ENCODE measurements at regions of chr11 and their contacts with region 1.

Region 1: DNA sequence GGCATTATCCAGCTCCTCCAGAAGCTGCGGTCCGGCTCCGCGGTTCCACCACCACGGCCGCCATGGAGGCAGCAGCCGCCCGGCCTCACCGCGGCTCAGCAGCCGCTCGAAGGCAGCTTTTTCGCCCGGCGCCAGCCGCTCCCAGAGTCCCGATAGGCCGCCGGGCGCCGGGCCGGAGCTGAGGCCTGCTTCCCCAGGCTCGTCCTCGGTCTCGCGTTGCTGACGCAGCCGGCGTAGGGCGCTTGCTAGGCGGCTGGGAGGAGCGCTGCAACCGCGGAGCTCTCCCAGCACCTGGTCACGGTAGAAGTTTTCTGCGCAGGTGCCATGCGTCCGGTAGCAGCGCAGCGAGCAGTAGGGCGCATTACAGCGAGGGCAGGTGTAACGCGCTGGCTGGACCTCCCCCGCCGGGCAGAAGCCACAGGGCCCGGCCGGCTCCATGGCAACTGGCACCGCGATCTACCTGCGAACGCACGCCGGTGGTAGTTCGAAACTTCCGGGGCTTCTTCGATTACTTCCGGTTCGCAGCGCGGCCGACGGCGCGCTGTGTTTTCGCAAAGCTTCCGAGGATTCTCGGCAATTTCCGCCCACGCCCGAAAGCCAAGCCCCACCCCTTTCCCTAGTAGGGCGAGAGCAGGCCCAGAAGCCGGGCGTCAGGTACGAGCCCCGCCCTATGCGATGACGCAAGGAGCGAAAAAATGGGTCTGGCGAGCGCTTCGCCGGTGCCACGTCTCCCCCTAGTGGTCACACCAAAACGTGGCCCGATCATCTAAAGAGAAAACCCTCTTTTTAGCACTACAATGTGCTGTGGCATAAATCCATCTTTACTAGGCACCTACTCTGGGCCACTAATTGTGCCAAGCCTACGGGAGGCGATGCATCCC is at the start of gene ZNHIT2:
- DNase-seq: peak; percentile 98
- ATAC-seq: peak; percentile 70
- H3K4me3 Mint-ChIP-seq: peak within 1 kb of the TSS; percentile 87
- H3K27ac Mint-ChIP-seq: peak within 1 kb of the TSS; percentile 89
- H3K4me1 Mint-ChIP-seq: peaks cover 76% of the 10 kb centered on the region
- H3K27me3 Mint-ChIP-seq: no peaks in the 10 kb centered on the region
- CTCF ChIP-seq: peak; percentile 34
- total RNA-seq, gene ZNHIT2: 11.3 and 13.4 TPM in 2 replicates

Region 2: DNA sequence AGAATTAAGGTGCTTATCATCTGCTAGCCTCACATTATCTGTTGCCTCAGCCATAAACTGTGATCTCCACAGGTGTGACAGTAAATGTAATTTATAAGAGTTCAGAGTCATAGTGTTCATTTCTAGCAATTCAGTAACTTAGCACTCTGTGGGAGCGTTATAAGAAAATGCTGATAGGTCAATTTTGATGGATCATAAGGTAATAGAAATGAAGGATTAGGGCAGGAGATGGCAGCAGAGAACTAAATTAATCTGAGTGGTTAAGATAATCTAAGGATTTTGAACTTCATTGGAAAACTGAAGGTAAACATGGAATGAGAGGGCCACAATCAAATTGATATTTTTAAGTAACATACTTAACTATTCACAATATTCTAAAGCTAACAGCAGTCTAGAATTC is 1774.3 kb before region 1 on chr11:
- CTCF ChIA-PET with region 1: no interaction called
- POLR2A ChIA-PET with region 1: no interaction called
- intact Hi-C with region 1: no loop called
- DNase-seq: no peak
- ATAC-seq: no peak
- H3K4me3 Mint-ChIP-seq: no peak overlapping the region
- H3K27ac Mint-ChIP-seq: no peak overlapping the region
- H3K4me1 Mint-ChIP-seq: no peaks in the 10 kb centered on the region
- H3K27me3 Mint-ChIP-seq: peaks cover 3% of the 10 kb centered on the region
- CTCF ChIP-seq: no peak

Region 3: DNA sequence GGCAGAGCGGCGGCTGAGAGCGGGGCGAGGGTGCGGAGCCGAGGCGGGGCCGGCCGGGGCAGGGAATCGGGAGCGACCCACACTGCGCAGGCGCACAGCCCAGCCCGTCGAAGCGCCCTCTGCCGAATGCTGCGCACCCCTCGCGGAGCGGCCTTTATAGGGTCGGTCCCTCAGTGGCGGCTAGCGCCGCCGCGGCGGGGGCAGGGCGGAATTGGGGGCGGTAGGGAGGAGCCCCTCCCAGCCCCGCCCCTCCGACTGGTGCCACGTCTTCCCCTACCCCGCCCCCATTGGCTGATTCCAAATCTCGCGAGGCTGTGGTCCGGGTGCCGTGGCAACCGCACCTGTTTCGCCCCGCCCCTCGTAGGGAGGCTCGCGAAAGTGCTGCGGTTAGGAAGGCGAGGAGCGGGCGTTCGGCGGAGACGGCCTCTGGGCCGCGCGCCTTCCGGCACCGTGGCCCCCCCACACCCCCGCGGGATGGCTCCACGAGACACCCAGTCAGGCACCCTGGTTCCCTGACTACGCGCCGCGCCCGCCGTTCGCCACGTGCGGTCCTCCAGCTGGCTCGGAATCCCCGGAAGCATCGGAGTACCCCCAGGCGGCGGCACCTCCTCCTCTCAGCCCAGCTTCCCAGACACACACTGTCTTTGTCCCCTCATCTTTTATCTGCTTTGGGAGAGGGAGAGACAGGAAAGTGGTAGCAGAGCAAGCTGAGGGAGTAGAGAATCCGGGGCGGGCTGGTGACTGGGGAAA is 238.8 kb before region 1 on chr11 and contains the start of gene EHD1:
- CTCF ChIA-PET with region 1: no interaction called
- POLR2A ChIA-PET with region 1: interaction called, 3 read pairs
- intact Hi-C with region 1: loop called (anchors 1 kb)
- DNase-seq: peak; percentile 98
- ATAC-seq: peak; percentile 81
- H3K4me3 Mint-ChIP-seq: peak within 1 kb of the TSS; percentile 97
- H3K27ac Mint-ChIP-seq: peak within 1 kb of the TSS; percentile 95
- H3K4me1 Mint-ChIP-seq: peaks cover 57% of the 10 kb centered on the region
- H3K27me3 Mint-ChIP-seq: no peaks in the 10 kb centered on the region
- CTCF ChIP-seq: no peak
- total RNA-seq, gene EHD1: 357 and 360 TPM in 2 replicates

Region 4: DNA sequence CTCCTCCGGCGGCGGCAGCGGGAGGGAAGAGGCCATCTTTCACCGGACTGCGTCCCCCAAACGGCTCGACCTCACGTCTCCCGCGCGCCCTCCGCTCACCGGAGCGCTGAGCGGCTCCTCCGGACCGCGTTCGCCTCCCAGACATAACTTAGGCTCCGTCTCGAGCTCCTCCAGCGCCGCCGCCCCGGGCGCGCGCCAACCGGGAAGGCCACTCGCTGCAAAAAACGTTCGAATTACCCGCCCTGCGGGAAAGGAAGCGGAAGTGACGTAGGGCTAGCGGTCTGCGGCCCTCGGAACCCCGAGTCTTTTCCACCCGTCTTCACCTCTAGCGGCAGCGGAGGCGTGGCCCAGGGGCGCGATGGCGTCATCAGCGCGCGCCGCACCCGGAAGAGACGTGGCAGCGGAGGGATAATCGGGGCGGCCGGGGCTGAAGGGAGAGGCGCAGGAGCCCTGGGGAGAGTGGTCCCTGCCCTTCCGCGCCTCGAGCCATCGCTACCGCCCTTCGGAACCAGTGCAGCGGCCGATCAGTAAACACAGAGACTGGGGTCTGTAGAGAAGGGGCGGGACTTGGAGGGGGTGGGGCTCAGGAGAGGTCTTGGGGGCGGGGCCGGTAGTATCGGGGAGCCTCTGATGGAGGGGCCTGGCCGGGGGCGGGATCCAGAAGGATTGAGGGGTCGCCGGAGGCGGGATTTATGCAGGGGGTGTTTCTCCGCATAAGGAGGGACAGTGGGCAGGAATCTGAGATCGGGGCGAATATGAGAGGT is 33.4 kb before region 1 on chr11 and contains the starts of genes CDCA5 and ZFPL1:
- CTCF ChIA-PET with region 1: interaction called, 5 read pairs
- POLR2A ChIA-PET with region 1: interaction called, 6 read pairs
- intact Hi-C with region 1: loop called (anchors 1 kb)
- DNase-seq: peak; percentile 97
- ATAC-seq: peak; percentile 92
- H3K4me3 Mint-ChIP-seq: peak within 1 kb of the TSS; percentile 93
- H3K27ac Mint-ChIP-seq: peak within 1 kb of the TSS; percentile 94
- H3K4me1 Mint-ChIP-seq: peaks cover 25% of the 10 kb centered on the region
- H3K27me3 Mint-ChIP-seq: no peaks in the 10 kb centered on the region
- CTCF ChIP-seq: no peak
- total RNA-seq, gene CDCA5: 2.6 and 3.4 TPM in 2 replicates
- total RNA-seq, gene ZFPL1: 35.7 and 36.6 TPM in 2 replicates

Region 5: DNA sequence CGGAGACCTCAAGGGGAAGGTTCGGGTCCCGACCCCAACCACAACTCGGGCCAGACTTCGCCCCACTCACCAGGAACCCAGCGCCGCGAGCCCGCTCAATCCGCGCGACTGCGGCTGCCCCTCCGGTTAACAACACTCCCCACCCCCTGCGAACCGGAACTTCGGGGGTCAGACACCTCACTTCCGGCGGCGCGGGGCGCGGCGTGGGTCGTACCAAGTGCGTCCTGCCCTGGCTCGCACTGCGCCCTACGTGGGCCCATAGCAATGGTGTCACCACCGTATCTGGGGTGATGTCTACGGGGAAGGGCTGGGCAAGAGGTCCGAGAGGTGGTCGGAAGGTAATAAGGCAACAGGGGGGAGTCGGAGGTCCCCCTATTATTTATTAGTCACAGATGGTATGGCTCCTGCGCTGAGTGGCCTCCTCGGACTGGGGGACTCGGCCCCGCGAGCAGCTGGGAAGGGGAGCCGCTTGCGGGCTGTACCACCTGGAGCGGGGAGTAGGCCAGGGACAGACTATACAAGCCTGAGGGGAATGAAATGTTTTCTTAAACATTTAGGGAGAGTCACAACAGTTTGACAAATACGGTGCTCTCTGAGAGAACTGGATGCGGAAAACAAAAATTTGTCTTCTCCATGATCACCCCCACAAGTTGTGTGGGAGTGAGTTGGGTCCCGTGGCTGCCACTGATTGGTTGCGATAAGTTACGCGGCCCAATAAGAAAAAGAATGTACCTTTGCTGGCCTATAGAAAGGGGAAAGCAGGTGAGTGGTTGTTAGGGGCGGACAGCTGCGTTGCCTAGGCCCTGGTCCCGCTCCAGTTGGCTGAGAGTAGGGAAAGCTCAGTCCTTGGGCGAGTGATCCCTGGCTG is 17.2 kb after region 1 on chr11 and contains the start of gene SYVN1:
- CTCF ChIA-PET with region 1: interaction called, 28 read pairs
- POLR2A ChIA-PET with region 1: interaction called, 546 read pairs
- intact Hi-C with region 1: loop called (anchors 1 kb)
- DNase-seq: peak; percentile 92
- ATAC-seq: peak; percentile 60
- H3K4me3 Mint-ChIP-seq: peak within 1 kb of the TSS; percentile 99
- H3K27ac Mint-ChIP-seq: peak within 1 kb of the TSS; percentile 99
- H3K4me1 Mint-ChIP-seq: peaks cover 64% of the 10 kb centered on the region
- H3K27me3 Mint-ChIP-seq: no peaks in the 10 kb centered on the region
- CTCF ChIP-seq: no peak
- total RNA-seq, gene SYVN1: 232 and 238 TPM in 2 replicates

Region 6: DNA sequence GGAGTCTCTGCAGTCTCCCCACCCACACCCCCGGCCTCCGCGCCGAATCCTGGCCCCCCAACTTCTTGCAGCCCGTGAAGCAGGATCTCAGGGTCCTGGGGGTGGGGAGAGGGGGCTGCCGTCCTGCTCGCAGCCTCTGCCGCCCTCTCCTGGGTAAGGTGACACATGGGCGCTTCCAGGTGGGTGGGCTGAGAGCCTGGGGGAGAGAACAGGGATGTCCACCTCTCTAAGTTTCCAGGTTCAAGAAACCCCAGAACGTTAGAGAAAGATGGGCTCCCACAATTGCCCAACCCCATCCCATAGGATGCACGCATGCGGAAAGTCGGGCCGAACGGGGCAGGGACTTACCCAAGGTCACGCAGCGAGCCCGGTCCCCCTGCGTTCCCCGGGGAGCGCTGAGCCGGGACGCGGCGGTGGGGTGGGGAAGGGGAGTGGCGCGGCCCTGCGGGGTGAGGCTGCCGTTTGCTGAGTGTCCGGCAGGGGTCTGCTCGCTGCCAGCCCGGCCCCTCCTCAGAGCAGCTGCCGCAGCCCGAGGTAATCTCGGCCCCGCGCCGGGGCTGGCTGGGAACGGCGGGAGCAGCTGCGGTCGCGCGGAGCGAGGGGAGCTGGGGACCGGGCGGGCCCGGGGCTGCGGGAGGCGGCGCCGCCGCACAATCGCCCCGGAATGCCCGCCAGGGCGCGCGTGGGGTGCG is 63.6 kb after region 1 on chr11:
- CTCF ChIA-PET with region 1: interaction called, 48 read pairs
- POLR2A ChIA-PET with region 1: interaction called, 69 read pairs
- intact Hi-C with region 1: loop called (anchors 1 kb)
- DNase-seq: peak; percentile 77
- ATAC-seq: peak; percentile 82
- H3K4me3 Mint-ChIP-seq: peak overlapping the region; percentile 92
- H3K27ac Mint-ChIP-seq: peak overlapping the region; percentile 92
- H3K4me1 Mint-ChIP-seq: peaks cover 21% of the 10 kb centered on the region
- H3K27me3 Mint-ChIP-seq: no peaks in the 10 kb centered on the region
- CTCF ChIP-seq: no peak

Measured in activated B cell treated with CpG ODN at 0.5 μM for 24 hours (primary cell).